Activated T-helper 1 cell treated with anti-CD3 and anti-CD28 coated beads, Interleukin-12 subunit alpha, Interleukin-12 subunit beta, Interleukin-2, Interleukin-4 antibody, amounts not matched to agents 30 ng/mL and 10 ng/mL and 1 ng/mL, durations not matched to agents 14 hours and 24 hours and 36 hours (primary cell): ENCODE measurements at regions of chr9 and their contacts with region 1.

Region 1: GRCh38 chr9:92764988-92765936 is 629 bp upstream of the BICD2 start:
- DNase-seq: peak; percentile 98
- H3K4me3 Mint-ChIP-seq: peak overlapping the region; percentile 86
- H3K27ac Mint-ChIP-seq: peak overlapping the region; percentile 92
- H3K4me1 Mint-ChIP-seq: peaks cover 45% of the 10 kb centered on the region
- H3K27me3 Mint-ChIP-seq: no peaks in the 10 kb centered on the region

Region 2: DNA sequence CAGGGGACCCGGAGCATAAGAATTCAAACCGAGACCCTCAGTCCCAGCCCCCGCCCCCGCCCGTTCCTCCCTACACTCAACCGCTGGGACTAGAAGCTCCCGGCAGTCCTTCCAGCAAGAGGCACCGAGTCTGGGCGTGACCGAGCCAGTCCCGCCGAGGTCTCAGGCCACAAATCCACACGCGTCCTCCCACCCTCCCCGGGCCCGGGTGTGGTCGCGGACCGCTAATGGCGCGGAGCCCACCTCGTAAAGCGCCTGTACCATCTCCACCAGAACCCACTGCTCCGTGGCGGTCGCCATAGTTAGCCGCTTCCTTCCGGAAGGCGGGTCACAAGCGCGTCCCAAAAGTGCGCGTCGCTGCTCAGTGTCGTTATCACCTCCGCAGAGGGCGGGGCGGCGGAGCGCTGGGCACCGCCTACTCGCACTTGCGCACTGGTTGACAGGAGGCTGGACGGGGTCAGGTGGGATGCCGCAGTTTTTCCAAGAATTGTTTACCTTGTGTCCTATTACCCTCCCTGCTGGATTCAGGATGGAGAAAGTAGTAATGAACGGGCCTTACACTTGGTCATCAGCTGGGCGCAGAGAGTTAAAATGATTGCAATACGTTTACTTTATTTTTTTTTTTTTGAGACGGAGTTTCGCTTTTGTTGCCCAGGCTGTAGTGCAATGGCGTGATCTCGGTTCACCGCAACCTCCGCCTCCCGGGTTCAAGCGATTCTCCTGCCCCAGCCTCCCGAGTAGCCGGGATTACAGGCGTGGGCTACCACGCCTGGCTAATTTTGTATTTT is 650.0 kb before region 1 on chr9 and contains the start of gene SPTLC1:
- intact Hi-C with region 1: loop called (anchors 1 kb)
- DNase-seq: peak; percentile 93
- H3K4me3 Mint-ChIP-seq: peak within 1 kb of the TSS; percentile 97
- H3K27ac Mint-ChIP-seq: peak within 1 kb of the TSS; percentile 95
- H3K4me1 Mint-ChIP-seq: peaks cover 47% of the 10 kb centered on the region
- H3K27me3 Mint-ChIP-seq: no peaks in the 10 kb centered on the region
- total RNA-seq, gene SPTLC1: 60.2 and 62.3 TPM in 2 replicates

Region 3: GRCh38 chr9:92669890-92670708 is 95.2 kb before region 1 on chr9 and contains the start of gene IPPK:
- intact Hi-C with region 1: loop called (anchors 1 kb)
- DNase-seq: peak; percentile 98
- H3K4me3 Mint-ChIP-seq: peak within 1 kb of the TSS; percentile 88
- H3K27ac Mint-ChIP-seq: peak within 1 kb of the TSS; percentile 88
- H3K4me1 Mint-ChIP-seq: peaks cover 38% of the 10 kb centered on the region
- H3K27me3 Mint-ChIP-seq: no peaks in the 10 kb centered on the region
- total RNA-seq, gene IPPK: 14.8 and 14.9 TPM in 2 replicates

Region 4: DNA sequence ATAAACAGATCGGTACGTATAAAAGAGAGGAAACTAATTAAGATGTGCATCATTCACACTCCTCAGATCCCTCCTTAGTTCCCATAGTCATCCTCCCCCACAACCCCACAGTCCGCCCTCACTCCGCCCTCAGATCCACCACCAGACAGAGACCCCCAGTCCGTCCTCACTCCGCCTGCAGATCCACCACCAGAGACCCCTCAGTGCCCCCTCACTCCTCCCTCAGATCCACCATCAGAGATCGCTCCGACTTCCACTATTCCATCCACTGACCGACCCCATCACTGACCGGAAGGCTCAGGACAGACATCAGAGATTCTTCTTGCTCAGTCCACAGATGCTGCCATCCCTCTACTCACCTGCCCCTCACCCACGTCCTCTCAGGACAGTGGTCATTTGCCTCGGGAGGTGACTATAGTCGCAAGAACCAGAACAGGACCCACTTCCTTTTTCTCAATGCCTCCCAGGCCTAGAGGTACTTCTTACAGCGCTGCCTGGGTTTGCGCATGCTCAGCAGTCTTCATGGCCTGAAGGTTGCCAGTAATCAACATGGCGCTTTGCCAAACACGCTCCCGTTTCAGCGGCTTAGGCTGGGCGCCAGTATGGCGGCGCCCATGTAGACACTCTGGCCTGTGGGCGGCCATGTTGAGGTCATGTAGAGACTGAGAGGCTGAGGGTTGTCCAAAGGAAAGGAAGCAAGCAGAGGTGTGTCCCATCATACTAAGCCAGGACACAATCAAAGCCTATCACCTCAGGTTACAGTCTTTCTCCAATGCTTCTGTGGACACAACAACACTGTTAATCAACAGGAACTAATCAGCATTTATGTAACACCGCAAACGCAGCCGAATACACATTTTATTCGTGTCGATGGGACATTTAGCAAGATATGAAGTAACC is 112.5 kb after region 1 on chr9 and contains the start of gene ZNF484:
- intact Hi-C with region 1: loop called (anchors 1 kb)
- DNase-seq: peak; percentile 92
- H3K4me3 Mint-ChIP-seq: peak within 1 kb of the TSS; percentile 92
- H3K27ac Mint-ChIP-seq: peak within 1 kb of the TSS; percentile 97
- H3K4me1 Mint-ChIP-seq: peaks cover 46% of the 10 kb centered on the region
- H3K27me3 Mint-ChIP-seq: peaks cover 4% of the 10 kb centered on the region
- total RNA-seq, gene ZNF484: 7.2 and 8.1 TPM in 2 replicates

Region 5: GRCh38 chr9:93064392-93065134 is 299.3 kb after region 1 on chr9:
- intact Hi-C with region 1: loop called (anchors 1 kb)
- DNase-seq: peak; percentile 91
- H3K4me3 Mint-ChIP-seq: peak overlapping the region; percentile 91
- H3K27ac Mint-ChIP-seq: peak overlapping the region; percentile 96
- H3K4me1 Mint-ChIP-seq: peaks cover 84% of the 10 kb centered on the region
- H3K27me3 Mint-ChIP-seq: no peaks in the 10 kb centered on the region

Region 6: DNA sequence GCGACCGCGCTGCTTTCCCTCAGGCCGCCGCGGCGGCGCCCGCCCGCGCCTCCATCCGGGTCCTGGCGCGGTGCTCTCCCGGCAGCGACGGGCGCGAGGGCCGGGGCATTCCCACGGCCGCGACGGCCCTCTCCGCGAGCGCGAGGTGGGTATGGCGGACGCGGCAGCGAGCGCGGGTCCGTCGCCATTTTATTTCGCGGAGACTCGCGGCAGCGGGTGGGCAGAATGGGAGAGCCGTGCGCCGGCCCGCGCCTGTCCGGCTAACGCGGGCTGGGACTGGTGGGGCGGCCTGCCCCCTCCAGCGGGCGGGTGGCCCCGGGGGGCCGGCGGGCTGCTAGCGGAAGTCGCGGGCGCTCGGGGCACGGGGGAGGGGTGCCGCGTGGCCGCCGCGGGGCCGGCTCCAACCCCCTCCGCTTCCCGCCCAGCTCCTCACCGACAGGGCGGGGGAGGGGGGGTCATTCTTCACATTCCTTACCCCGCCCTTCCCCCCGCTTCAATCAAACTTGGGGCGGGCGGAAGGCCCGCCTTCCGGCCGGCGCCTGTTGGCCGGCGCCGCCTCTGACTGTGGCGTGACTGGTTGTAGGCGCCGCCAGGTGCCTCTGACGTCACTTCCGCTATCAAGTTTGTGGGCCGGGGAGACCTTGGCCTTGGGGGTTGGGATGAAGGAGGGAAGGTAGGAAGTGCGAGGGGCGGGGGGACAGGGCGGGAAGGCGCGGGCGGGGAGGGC is 1401.1 kb after region 1 on chr9:
- intact Hi-C with region 1: loop called (anchors 10 kb)
- DNase-seq: peak; percentile 92
- H3K4me3 Mint-ChIP-seq: peak overlapping the region; percentile 95
- H3K27ac Mint-ChIP-seq: peak overlapping the region; percentile 89
- H3K4me1 Mint-ChIP-seq: peaks cover 46% of the 10 kb centered on the region
- H3K27me3 Mint-ChIP-seq: peaks cover 2% of the 10 kb centered on the region